WTC11 (cell line): ENCODE measurements at regions of chr12 and their contacts with region 1.

Region 1: DNA sequence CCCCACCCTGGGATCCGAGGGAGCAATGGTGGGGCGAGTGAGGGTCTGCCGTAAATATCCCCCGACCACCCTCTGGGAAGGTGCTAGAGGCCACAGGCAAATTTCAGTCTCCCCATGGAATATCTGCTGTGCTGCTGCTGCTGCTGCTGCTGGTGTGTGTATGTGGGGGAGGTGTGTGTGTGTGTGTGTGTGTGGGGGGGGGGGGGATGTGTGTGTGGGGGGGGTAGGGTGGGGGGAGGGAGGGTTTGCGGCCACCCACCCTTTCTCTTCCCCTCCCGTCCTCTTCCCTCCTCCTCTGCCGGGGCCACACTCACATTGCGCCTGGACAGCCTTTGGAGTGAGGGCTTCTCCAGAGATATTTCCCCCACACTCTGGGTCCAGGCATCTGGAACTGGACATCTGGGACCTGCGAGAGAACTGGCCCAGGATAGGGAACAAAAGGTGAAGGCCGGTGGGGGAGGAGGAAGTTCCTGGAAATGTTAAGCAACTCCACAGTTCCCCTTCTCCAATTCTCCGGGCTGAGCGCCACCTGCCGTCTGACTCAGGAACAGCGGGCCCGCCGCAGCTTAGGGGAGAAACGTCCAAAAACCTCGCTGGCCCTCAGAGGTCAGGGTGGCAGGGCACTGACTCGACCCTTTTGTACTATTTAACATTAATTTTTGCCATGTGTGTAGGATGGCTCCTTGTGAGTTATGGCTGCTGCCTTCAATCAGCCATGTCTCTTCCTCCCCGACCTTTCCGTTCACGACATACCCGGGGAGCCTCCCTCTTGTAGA is at the start of gene C1RL:
- DNase-seq: peak; percentile 95
- ATAC-seq: peak; percentile 60
- H3K4me3 Mint-ChIP-seq: peak within 1 kb of the TSS; percentile 89
- H3K27ac Mint-ChIP-seq: peak within 1 kb of the TSS; percentile 78
- H3K4me1 Mint-ChIP-seq: peaks cover 12% of the 10 kb centered on the region
- H3K27me3 Mint-ChIP-seq: no peaks in the 10 kb centered on the region
- CTCF ChIP-seq: peak; percentile 92
- total RNA-seq, gene C1RL: 17.7 to 23.7 TPM (median 22.9 TPM) in 3 replicates

Region 2: DNA sequence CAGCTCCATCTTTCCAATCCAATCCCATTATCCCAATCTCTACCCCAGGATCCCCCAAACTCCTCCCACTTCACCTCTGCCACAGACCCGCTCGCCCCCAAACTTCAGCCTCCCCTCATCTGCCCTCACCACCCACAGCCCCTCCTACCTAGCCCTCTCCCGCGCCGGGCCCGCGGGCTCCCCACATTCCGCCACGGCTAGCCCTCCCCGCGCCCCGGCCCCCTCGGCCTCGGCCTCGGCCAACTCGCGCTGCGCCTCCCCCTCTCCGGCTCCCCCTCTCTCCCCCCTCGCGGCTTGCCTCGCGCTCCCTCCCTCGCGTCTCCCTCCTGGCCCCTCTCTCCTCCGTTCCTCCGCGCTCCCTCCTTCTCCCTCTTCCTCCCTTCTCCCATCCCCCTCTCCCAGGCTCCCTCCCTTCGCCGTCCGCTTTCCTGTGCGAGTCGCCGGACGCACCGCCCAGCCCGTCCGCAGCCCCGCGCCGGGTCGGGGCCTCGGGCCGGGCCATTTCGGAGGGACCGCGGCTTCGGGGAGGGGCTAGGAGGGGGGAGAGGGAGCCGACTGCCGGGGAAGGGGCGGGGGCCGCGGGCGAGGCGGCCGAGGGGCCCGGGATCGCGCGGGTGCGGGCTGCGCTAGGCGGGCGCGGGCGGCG is 181.5 kb before region 1 on chr12 and contains the start of gene ATN1:
- CTCF ChIA-PET with region 1: interaction called, 10 read pairs
- POLR2A ChIA-PET with region 1: no interaction called
- DNase-seq: peak; percentile 86
- ATAC-seq: peak; percentile 19
- H3K4me3 Mint-ChIP-seq: peak within 1 kb of the TSS; percentile 94
- H3K27ac Mint-ChIP-seq: peak within 1 kb of the TSS; percentile 98
- H3K4me1 Mint-ChIP-seq: peaks cover 58% of the 10 kb centered on the region
- H3K27me3 Mint-ChIP-seq: no peaks in the 10 kb centered on the region
- CTCF ChIP-seq: no peak
- total RNA-seq, gene ATN1: 80.0 to 87.1 TPM (median 80.5 TPM) in 3 replicates

Region 3: GRCh38 chr12:7018350-7019042 is 90.5 kb before region 1 on chr12 and contains the start of gene LPCAT3:
- CTCF ChIA-PET with region 1: interaction called, 22 read pairs
- POLR2A ChIA-PET with region 1: no interaction called
- DNase-seq: peak; percentile 98
- ATAC-seq: peak; percentile 94
- H3K4me3 Mint-ChIP-seq: peak within 1 kb of the TSS; percentile 95
- H3K27ac Mint-ChIP-seq: peak within 1 kb of the TSS; percentile 87
- H3K4me1 Mint-ChIP-seq: peaks cover 27% of the 10 kb centered on the region
- H3K27me3 Mint-ChIP-seq: no peaks in the 10 kb centered on the region
- CTCF ChIP-seq: peak; percentile 60
- total RNA-seq, gene LPCAT3: 35.3 to 40.0 TPM (median 36.2 TPM) in 3 replicates

Region 4: GRCh38 chr12:7060353-7060954 is 48.5 kb before region 1 on chr12 and contains the start of gene C1S:
- CTCF ChIA-PET with region 1: interaction called, 48 read pairs
- POLR2A ChIA-PET with region 1: interaction called, 7 read pairs
- DNase-seq: peak; percentile 42
- ATAC-seq: peak; percentile 92
- H3K4me3 Mint-ChIP-seq: peak within 1 kb of the TSS; percentile 46
- H3K27ac Mint-ChIP-seq: peak within 1 kb of the TSS; percentile 27; the same call in 1 of the 2 replicates
- H3K4me1 Mint-ChIP-seq: peaks cover 17% of the 10 kb centered on the region
- H3K27me3 Mint-ChIP-seq: peaks cover 2% of the 10 kb centered on the region; the same call in 1 of the 2 replicates
- CTCF ChIP-seq: no peak
- total RNA-seq, gene C1S: 6.2 to 8.8 TPM (median 7.6 TPM) in 3 replicates

Region 5: DNA sequence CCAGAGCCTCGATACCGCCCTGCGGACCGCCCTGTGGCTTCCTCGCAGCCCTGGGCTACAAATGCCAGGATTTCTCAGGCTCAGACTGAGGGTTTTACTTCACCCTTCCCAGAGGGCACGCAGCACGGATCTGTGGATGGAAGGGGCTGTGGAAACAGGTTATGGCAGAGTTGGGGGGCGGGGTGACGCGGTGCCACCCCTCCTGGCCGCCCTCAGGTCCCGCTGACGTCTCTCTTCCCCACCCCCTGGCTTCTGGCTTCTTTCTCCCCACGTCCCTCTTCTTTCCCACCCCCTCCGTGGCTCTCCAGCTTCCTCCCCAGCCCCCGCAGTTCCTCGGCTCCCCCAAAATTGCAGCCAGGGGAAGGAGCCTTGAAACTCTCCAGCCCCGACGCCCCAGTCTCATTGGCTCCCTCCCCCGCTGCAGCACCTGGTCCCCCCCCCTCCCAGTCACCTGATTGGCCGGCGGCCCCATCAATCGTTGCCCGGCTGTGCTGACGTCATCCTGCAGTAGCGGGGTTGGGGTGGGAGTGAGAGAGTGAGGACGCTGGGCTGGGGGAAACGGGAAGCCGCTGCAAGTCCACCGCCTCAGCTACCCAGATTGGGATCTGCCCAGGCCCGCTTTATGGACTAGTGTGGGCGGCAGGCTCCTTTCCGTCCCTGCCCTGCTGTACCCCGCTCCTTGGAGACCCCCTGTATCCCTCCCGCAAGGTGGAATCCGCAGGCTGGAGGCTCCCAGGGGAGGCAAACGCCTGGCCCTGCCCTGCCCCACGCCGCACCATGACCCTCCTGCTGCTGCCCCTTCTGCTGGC is 21.1 kb after region 1 on chr12 and contains the start of gene CLSTN3:
- CTCF ChIA-PET with region 1: interaction called, 11 read pairs
- POLR2A ChIA-PET with region 1: no interaction called
- DNase-seq: peak; percentile 89
- ATAC-seq: peak; percentile 80
- H3K4me3 Mint-ChIP-seq: peak within 1 kb of the TSS; percentile 93
- H3K27ac Mint-ChIP-seq: peak within 1 kb of the TSS; percentile 81
- H3K4me1 Mint-ChIP-seq: peaks cover 34% of the 10 kb centered on the region
- H3K27me3 Mint-ChIP-seq: peaks cover 23% of the 10 kb centered on the region
- CTCF ChIP-seq: no peak
- total RNA-seq, gene CLSTN3: 23.7 to 28.2 TPM (median 24.7 TPM) in 3 replicates

Region 6: DNA sequence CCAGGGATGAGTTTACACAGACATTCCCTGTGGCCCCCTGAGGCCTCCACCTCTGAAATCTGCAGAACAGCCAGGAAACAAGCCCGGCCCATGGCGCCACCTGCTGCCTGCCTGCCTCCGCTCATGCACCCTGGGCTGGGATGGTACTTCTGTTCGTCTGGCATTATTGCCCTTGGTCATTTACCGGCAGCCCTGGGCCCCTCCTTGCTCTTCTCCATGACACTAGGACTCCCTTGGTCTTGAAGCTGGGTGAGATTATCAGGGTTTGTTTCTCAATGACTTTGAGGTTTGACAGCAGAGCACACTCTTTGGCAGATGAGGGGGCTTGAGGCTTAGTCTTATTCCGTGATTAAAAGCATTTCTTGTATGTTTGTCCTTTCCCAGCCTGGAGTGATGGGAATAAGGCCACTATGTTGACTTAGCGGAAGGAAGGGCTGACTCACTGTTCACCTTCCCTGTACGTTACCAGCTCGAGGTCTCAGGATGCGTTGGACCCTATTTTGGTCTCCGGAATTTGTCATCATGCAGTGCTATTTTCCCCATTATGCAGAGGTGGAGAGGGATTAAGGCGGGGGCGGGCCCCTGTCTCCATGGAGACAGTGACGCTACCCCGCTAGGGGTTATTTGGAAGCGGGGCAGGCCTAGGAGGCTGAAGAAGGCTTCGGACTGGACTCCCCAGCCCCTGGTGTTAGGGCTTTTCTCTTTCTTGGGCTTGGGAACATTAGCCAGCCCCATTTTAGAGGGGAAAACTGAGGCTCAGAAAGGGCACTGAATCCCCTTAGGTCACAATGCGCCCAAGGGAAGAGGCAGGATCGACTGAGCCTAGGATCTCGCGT is 79.8 kb after region 1 on chr12:
- CTCF ChIA-PET with region 1: interaction called, 10 read pairs
- POLR2A ChIA-PET with region 1: no interaction called
- DNase-seq: peak; percentile 91
- ATAC-seq: peak; percentile 74
- H3K4me3 Mint-ChIP-seq: peak overlapping the region; percentile 87
- H3K27ac Mint-ChIP-seq: no peak overlapping the region
- H3K4me1 Mint-ChIP-seq: peaks cover 29% of the 10 kb centered on the region
- H3K27me3 Mint-ChIP-seq: peaks cover 2% of the 10 kb centered on the region
- CTCF ChIP-seq: 0 out of 2 replicates have a peak, but pooled peaks have one; percentile 30